Esophagus squamous epithelium (tissue), 5 donors: ENCODE measurements at regions of chr1 and their contacts with region 1.

Region 1: GRCh38 chr1:111507411-111508201 is 4.2 kb upstream of the ADORA3 start:
- DNase-seq: peak; percentile 31
- H3K4me3 ChIP-seq: peak overlapping the region; percentile 11 to 59 (median 38)
- H3K27ac ChIP-seq: peak overlapping the region; percentile 85 to 98 (median 95)
- H3K4me1 ChIP-seq: peaks cover 14 to 48% (median 31%) of the 10 kb centered on the region in 3 donors
- H3K27me3 ChIP-seq: no peaks in the 10 kb centered on the region
- CTCF ChIP-seq: no peak
- POLR2A ChIP-seq: peak in 2 of 4 donors; percentile 15 to 25

Region 2: DNA sequence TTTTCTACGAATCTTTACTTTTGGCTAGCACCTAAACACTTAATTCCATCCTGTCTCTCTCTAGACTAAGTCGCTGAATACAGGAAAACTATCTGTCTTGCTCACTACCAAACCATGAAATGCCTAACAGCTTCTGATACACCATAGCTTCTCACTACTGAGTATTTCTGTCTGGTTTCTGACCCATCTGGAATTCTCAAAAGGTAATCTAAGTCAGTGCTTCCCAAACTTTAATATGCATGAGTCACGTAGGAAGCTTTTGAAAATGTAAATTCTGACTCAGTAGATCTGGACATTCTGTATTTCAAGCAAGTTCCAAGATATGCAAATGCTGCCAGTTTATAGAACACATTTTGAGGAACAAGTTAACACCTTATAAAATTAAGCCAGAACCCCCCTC is 70.9 kb before region 1 on chr1:
- intact Hi-C with region 1: no loop called
- DNase-seq: no peak
- H3K4me3 ChIP-seq: no peak overlapping the region
- H3K27ac ChIP-seq: no peak overlapping the region
- H3K4me1 ChIP-seq: no peaks in the 10 kb centered on the region
- H3K27me3 ChIP-seq: no peaks in the 10 kb centered on the region
- CTCF ChIP-seq: no peak
- POLR2A ChIP-seq: no peak

Region 3: GRCh38 chr1:111463029-111463683 is 44.5 kb before region 1 on chr1:
- intact Hi-C with region 1: no loop called
- DNase-seq: no peak
- H3K4me3 ChIP-seq: no peak overlapping the region
- H3K27ac ChIP-seq: peak overlapping the region in 1 of 4 donors; percentile 23
- H3K4me1 ChIP-seq: peaks cover 0 to 6% (median 0%) of the 10 kb centered on the region in 3 donors
- H3K27me3 ChIP-seq: no peaks in the 10 kb centered on the region
- CTCF ChIP-seq: no peak
- POLR2A ChIP-seq: no peak

Region 4: DNA sequence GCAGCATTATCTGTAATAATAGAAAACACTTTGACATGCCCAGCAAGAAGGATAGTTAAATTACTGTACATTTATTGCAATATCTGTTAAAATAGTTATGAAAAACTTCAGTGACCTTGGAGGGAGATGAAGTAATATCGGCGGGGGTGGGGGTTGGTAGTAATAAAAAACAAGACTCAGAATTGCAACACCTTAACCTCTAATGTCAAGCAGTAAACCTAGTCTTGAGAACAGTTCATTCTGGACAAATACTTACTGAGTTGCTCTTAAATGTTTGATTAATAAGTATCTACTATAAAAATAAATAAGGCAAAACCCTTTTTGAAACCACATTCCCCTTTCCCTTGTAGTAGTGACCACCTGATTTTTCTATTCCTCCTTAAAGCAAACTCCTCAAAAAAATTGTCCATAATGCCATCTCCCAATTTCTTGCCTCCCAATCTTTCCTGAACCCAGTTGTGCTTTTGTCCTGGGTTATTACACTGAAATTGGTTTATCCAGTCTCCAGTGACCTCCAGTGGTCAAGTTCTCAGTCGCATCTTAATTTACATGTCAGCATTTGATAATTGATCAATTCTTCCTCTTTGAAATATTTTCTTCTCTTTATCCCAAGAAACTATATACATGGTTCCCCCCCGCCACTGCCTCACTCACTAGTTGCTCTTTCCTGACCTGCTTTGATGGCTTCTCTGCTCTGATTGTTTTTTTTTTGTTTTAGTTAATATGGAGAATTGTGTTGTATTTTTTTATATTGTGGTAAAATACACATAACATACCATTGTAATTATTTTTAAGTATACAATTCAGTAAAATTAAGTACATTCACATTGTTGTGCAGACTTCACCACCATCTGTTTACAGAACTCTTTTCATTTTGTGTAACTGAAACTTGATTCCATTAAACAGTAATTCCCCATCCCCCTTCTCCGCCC is 148.7 kb after region 1 on chr1:
- intact Hi-C with region 1: loop called (anchors 5 kb)
- DNase-seq: no peak
- H3K4me3 ChIP-seq: no peak overlapping the region
- H3K27ac ChIP-seq: peak overlapping the region in 3 of 4 donors; percentile 15 to 48 (median 17)
- H3K4me1 ChIP-seq: peaks cover 0 to 77% (median 12%) of the 10 kb centered on the region in 3 donors
- H3K27me3 ChIP-seq: no peaks in the 10 kb centered on the region
- CTCF ChIP-seq: peak; percentile 5 to 65 (median 54)
- POLR2A ChIP-seq: no peak

Region 5: GRCh38 chr1:111704776-111705175 is 197.2 kb after region 1 on chr1:
- intact Hi-C with region 1: no loop called
- DNase-seq: no peak
- H3K4me3 ChIP-seq: no peak overlapping the region
- H3K27ac ChIP-seq: no peak overlapping the region
- H3K4me1 ChIP-seq: peaks cover 0 to 9% (median 0%) of the 10 kb centered on the region in 3 donors
- H3K27me3 ChIP-seq: no peaks in the 10 kb centered on the region
- CTCF ChIP-seq: no peak
- POLR2A ChIP-seq: no peak

Region 6: GRCh38 chr1:111747282-111747734 is 239.7 kb after region 1 on chr1:
- intact Hi-C with region 1: loop called (anchors 10 kb)
- DNase-seq: no peak
- H3K4me3 ChIP-seq: no peak overlapping the region
- H3K27ac ChIP-seq: no peak overlapping the region
- H3K4me1 ChIP-seq: peaks cover 0 to 14% (median 0%) of the 10 kb centered on the region in 3 donors
- H3K27me3 ChIP-seq: no peaks in the 10 kb centered on the region
- CTCF ChIP-seq: peak; percentile 43 to 86 (median 63)
- POLR2A ChIP-seq: no peak

Region 7: GRCh38 chr1:111833334-111833733 is 325.7 kb after region 1 on chr1:
- intact Hi-C with region 1: no loop called
- DNase-seq: no peak
- H3K4me3 ChIP-seq: no peak overlapping the region
- H3K27ac ChIP-seq: no peak overlapping the region
- H3K4me1 ChIP-seq: no peaks in the 10 kb centered on the region
- H3K27me3 ChIP-seq: no peaks in the 10 kb centered on the region
- CTCF ChIP-seq: no peak
- POLR2A ChIP-seq: no peak